GM18951 (cell line): ENCODE measurements at regions of chr7 and their contacts with region 1.

Region 1: GRCh38 chr7:35037526-35038339 is 448 bp upstream of the DPY19L1 start:
- POLR2A ChIP-seq: peak; percentile 80

Region 2: DNA sequence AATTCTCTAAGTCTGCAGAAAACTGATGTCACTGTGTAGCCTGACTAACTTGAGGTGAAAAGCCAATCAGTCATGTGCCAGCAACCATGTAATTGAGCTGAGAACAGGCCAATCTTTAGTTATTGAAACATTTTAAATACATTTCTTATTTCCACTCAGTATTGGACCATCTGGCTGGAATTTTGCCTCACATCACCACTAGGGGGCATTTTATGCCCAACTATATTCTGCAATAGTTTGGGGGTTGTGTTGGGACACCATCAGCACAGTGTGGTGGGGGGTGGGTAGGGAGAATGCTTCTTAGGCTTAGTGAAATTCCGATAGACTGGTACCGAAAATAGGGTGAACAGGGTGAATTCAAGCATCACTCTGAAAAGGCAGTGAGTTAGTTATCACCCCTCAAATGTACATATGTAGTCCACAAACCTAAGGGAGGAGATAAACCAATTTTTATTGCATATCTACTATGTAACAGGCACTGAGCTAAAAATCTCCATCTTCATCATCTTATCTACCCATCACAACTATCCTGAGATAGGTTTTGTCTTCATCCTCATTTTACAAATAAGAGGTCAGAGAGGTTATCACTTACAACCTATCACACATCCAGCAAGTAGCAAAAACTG is 361.9 kb before region 1 on chr7:
- in situ Hi-C with region 1: loop called (anchors 25 kb)
- POLR2A ChIP-seq: no peak